ENCODE measurements at regions of chrX and their contacts with region 1.

Region 1: DNA sequence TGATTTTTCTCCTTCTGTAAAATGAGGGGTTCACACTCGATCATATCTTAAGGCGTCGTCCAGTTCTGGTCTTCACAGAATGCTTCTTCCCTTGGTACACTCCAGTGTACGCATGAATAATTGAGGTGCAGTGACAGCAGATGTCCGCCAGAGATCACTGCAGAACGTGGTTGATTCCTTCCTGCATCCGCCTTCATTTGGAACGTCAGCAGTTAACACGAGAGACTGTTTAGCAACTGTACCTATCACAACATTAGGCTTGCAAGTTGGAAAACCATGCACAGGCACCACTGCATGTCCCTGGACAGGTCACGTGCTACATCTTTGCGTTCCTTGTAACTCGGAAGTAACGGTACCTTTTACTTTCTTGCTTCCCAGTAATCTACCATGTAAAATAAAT is 66.0 kb upstream of the GEMIN8 start:
- DNase-seq: peak in 1 of 2 experiments; percentile 18
- H3K4me3 ChIP-seq: no peak overlapping the region
- H3K27ac ChIP-seq: no peak overlapping the region
- H3K4me1 ChIP-seq: no peaks in the 10 kb centered on the region
- H3K27me3 ChIP-seq: no peaks in the 10 kb centered on the region
- CTCF ChIP-seq: peak; percentile 70

Region 2: DNA sequence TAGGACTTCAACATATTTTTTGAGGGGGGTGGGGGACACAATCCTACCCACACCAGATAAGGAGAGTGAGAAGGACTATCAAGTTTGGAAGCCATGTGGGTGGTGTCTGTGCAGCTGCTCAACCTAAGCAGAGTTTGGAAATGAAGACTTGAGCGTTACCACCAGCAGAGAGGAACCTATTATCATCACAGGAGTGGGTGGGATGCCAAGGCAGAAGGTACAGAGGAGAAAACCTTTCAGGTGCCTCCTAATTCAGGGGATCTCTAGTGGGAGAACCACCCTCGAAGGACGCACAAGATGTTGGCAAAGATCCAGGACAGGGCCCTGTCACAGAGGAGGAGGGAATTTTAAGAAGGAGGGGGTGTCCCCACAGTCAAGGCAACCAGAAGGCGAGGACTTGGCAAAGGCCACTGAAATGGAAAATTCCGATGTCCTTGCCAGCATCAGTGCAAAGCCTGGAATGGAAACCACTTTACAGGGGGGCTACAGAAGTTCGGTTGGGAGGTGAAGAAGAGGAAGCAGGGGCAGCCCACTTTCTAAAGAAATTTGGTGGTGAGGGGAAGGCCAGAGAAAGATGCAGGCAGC is 270.4 kb before region 1 on chrX:
- CTCF ChIA-PET with region 1: no interaction called
- POLR2A ChIA-PET with region 1: no interaction called
- intact Hi-C with region 1: no loop called
- DNase-seq: no peak
- H3K4me3 ChIP-seq: no peak overlapping the region
- H3K27ac ChIP-seq: no peak overlapping the region
- H3K4me1 ChIP-seq: no peaks in the 10 kb centered on the region
- H3K27me3 ChIP-seq: 0 out of 2 replicates have a peak, but pooled peaks cover 7% of the 10 kb centered on the region
- CTCF ChIP-seq: no peak

Region 3: DNA sequence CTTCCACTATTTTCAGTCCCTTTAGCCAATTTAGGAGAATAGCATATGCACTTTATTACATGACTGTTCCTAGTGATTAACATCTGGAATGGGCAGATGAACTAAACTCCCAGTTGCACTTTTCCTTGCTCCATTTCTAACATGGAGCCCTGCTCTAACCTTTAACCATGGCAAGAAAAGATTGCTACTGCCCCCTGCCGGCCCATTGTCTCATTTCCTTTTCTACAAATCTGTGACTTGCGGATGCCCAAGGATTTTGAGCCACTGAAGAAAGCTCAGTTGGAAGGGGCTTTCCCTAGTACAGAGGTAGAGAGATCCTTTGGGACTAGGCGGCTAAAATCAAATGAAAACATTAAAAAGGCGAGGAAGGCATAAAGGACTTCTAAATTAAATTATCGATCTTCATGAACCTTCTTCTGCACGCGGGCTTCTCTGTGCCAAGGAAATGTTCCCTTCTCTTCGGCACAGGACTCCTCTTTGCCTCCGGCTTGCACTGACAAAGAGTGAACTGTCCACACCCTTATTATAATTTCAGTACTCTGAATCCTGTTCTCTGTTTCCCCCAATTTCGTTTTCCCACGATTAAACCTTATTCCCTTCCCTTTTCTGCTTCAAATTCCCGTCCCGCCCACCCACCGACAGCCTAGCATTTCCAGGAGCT is 433.1 kb after region 1 on chrX:
- CTCF ChIA-PET with region 1: no interaction called
- POLR2A ChIA-PET with region 1: no interaction called
- intact Hi-C with region 1: loop called (anchors 2 kb)
- DNase-seq: peak in 1 of 2 experiments; percentile 42
- H3K4me3 ChIP-seq: no peak overlapping the region
- H3K27ac ChIP-seq: no peak overlapping the region
- H3K4me1 ChIP-seq: no peaks in the 10 kb centered on the region
- H3K27me3 ChIP-seq: no peaks in the 10 kb centered on the region
- CTCF ChIP-seq: peak; percentile 70

Region 4: DNA sequence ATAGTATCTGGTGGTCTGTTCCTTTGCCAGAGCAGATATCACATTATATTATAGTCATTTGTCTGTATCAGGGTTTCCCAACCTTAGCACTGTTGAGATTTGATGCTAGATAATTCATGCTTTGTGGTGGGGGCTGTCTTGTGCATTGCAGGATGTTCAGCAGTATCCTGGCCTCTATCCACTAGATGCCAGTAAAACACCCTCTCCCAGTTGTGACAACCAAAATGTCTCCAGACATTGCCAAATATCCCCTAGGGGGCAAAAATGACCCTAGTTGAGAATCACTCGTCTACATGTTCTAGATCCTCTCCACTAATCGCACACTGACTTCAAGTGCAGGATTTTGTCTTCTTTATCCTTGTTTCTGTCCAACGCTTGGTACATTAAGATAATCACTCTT is 616.4 kb after region 1 on chrX:
- CTCF ChIA-PET with region 1: no interaction called
- POLR2A ChIA-PET with region 1: no interaction called
- intact Hi-C with region 1: loop called (anchors 5 kb)
- DNase-seq: no peak
- H3K4me3 ChIP-seq: no peak overlapping the region
- H3K27ac ChIP-seq: no peak overlapping the region
- H3K4me1 ChIP-seq: no peaks in the 10 kb centered on the region
- H3K27me3 ChIP-seq: no peaks in the 10 kb centered on the region
- CTCF ChIP-seq: no peak

Measured in PC-9 (cell line).